H1 (cell line): ENCODE measurements at regions of chr10 and their contacts with region 1.

Region 1: GRCh38 chr10:21078410-21079329 is 181.6 kb upstream of the NEBL start:
- DNase-seq: peak; percentile 44 to 74
- H3K4me3 ChIP-seq: no peak overlapping the region
- H3K27ac ChIP-seq: no peak overlapping the region
- H3K4me1 ChIP-seq: peaks cover 0 to 3% (median 1%) of the 10 kb centered on the region in 4 experiments; a peak in 3 of 7 replicates
- H3K27me3 ChIP-seq: no peaks in the 10 kb centered on the region
- CTCF ChIP-seq: peak; percentile 62 to 88 (median 77)
- EP300 ChIP-seq: no peak
- POLR2A ChIP-seq: no peak
- RAD21 ChIP-seq: peak; percentile 95 to 96

Region 2: DNA sequence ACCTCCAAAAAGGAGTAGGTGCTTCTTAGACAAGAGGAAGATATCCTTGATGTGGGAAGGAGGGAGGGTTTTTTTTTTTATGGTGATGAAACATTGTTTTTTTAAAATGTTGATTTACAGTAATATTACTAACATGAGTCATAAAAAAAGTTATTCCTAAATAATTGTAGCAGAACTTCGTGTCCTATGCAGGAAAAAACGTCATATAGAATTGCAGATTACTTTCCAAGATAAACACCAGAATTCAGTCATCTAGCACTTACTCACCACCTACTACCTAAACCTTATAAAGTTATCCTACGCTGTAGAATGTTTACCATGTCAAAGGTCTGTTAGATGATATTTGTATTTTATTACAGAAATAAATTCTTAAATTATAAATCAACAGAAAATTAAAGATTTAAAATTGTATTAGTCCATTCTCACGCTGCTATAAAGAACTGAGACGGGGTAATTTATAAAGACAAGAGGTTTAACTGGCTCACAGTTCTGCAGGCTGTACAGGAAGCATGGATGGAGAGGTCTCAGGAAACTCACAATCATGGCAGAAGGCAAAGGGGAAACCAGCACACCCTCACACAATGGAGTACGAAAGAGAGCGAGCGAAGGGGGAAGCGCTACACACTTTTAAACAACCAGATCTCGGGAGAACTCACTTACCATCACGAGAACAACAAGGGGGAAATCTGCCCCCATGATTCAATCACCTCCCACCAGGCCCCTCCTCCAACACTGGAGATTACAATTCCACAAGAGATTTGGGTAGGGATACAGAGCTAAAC is 76.4 kb before region 1 on chr10:
- CTCF ChIA-PET with region 1: no interaction called
- POLR2A ChIA-PET with region 1: no interaction called
- DNase-seq: no peak
- H3K4me3 ChIP-seq: no peak overlapping the region
- H3K27ac ChIP-seq: no peak overlapping the region
- H3K4me1 ChIP-seq: no peaks in the 10 kb centered on the region
- H3K27me3 ChIP-seq: no peaks in the 10 kb centered on the region
- CTCF ChIP-seq: no peak
- EP300 ChIP-seq: no peak
- POLR2A ChIP-seq: no peak
- RAD21 ChIP-seq: no peak

Region 3: GRCh38 chr10:21068025-21068656 is 10.5 kb before region 1 on chr10:
- CTCF ChIA-PET with region 1: interaction called, 16 read pairs
- POLR2A ChIA-PET with region 1: no interaction called
- DNase-seq: no peak
- H3K4me3 ChIP-seq: no peak overlapping the region
- H3K27ac ChIP-seq: no peak overlapping the region
- H3K4me1 ChIP-seq: peaks cover 0 to 3% (median 0%) of the 10 kb centered on the region in 4 experiments; a peak in 1 of 7 replicates
- H3K27me3 ChIP-seq: no peaks in the 10 kb centered on the region
- CTCF ChIP-seq: no peak
- EP300 ChIP-seq: no peak
- POLR2A ChIP-seq: no peak
- RAD21 ChIP-seq: no peak

Region 4: DNA sequence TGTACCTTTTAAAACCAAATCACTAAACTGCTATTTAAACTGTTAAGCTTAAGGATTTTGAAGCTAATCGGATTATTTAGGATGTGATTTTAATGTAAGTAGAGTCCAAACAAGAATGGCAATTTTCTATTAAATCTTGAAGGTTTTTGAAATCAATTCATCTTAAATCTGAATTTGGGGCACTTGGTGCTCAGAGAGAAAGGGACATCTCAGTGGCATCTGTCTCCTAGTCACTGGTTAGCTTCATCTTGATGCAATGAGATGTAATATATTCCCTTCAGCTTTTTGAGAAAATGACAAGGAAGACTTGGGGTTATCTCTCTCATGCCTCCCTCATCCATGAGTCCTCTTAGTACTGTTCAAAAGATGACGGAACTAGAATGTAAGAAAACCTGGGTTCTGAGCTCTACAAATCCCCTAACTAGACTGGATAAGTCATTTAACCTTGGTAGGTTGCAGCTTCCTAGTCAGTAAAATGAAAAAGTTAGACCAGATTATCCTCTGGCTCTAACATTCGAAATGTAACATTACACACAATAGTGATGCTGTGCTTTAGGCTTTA is 16.9 kb after region 1 on chr10:
- CTCF ChIA-PET with region 1: interaction called, 11 read pairs
- POLR2A ChIA-PET with region 1: no interaction called
- DNase-seq: no peak
- H3K4me3 ChIP-seq: no peak overlapping the region
- H3K27ac ChIP-seq: no peak overlapping the region
- H3K4me1 ChIP-seq: no peaks in the 10 kb centered on the region
- H3K27me3 ChIP-seq: no peaks in the 10 kb centered on the region
- CTCF ChIP-seq: no peak
- EP300 ChIP-seq: no peak
- POLR2A ChIP-seq: no peak
- RAD21 ChIP-seq: no peak

Region 5: DNA sequence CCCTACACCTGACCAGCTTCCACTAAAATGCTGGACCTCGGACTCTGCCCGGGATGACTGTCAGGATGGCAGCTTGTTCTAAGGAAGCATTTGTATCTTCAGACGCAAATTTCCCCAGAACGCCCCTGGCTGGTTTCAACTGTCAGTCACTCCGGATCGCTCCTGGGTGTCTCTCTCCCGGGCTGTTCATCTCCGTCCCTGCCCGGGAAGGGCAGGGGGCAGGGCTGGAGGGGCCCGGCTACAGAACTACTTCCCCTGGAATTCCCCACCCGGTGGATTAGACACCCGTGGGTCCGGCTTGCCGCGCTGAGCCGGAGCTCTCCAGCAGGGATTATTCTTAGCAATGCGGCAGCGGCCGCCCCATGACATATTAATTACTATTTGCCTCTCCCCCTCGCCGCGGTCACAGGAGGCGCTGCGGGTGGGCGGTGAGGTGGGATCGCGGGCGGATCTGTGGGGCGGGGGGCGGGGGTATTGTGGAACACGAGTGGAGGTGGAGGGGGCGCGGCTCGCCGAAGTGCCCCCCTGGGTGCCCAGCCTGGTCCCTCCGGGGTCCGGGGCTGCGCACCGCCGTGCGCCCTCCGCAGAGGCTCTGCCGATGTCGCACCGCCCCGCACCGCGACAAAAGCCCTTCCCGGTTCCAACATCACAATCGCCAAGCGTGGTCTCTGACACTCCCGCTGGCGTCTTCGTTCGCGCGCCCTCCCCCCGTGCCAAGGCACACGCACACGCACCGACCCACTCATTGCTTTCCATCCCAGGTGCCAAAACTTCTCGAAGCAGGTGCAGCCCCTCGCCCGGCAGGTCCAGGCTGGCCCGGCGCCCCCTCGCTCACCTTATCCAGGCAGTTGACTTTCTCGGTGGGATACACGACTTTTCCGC is 94.5 kb after region 1 on chr10:
- CTCF ChIA-PET with region 1: interaction called, 11 read pairs
- POLR2A ChIA-PET with region 1: no interaction called
- DNase-seq: peak in 1 of 2 experiments; percentile 51
- H3K4me3 ChIP-seq: peak overlapping the region; percentile 59 to 82 (median 66)
- H3K27ac ChIP-seq: no peak overlapping the region
- H3K4me1 ChIP-seq: peaks cover 0 to 6% (median 3%) of the 10 kb centered on the region in 4 experiments; a peak in 4 of 7 replicates
- H3K27me3 ChIP-seq: peaks cover 0 to 18% (median 11%) of the 10 kb centered on the region in 4 experiments; a peak in 6 of 7 replicates
- CTCF ChIP-seq: no peak
- EP300 ChIP-seq: no peak
- POLR2A ChIP-seq: no peak
- RAD21 ChIP-seq: no peak

Region 6: DNA sequence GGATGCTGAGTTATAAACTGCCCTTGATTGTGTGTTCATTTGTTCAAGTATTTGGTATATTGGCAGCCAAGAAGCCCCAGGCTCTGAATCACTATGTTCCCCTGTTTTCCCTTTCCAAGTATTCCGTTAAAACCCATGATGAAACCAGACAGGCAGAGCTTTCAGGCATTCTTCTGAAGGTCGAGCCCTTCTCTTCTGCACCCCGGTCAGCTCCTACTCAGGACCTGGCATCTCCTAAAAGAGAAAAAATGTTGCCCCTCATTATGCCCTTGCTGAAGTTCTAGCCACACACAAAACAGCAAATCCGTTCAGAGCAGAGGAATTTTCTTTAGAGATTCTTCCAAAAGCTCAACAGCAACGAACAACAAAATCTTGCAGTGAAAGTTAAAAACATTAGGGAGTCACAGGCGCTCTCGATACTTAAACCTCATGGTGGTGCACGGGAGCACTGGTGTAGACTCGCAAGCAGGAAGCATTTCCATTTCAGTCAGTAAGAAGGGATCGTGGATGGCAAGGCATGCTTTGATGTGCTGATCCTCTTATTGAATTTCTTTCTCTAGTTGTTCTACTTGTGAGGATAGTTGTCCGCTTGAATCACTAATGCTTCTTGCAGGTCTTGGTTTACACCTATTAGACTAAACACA is 182.0 kb after region 1 on chr10:
- CTCF ChIA-PET with region 1: interaction called, 12 read pairs
- POLR2A ChIA-PET with region 1: no interaction called
- DNase-seq: no peak
- H3K4me3 ChIP-seq: no peak overlapping the region
- H3K27ac ChIP-seq: no peak overlapping the region
- H3K4me1 ChIP-seq: peaks cover 0 to 4% (median 1%) of the 10 kb centered on the region in 4 experiments; a peak in 3 of 7 replicates
- H3K27me3 ChIP-seq: no peaks in the 10 kb centered on the region
- CTCF ChIP-seq: no peak
- EP300 ChIP-seq: no peak
- POLR2A ChIP-seq: no peak
- RAD21 ChIP-seq: peak in 1 of 2 experiments; percentile 25; a peak in 2 of 4 replicates

Region 7: DNA sequence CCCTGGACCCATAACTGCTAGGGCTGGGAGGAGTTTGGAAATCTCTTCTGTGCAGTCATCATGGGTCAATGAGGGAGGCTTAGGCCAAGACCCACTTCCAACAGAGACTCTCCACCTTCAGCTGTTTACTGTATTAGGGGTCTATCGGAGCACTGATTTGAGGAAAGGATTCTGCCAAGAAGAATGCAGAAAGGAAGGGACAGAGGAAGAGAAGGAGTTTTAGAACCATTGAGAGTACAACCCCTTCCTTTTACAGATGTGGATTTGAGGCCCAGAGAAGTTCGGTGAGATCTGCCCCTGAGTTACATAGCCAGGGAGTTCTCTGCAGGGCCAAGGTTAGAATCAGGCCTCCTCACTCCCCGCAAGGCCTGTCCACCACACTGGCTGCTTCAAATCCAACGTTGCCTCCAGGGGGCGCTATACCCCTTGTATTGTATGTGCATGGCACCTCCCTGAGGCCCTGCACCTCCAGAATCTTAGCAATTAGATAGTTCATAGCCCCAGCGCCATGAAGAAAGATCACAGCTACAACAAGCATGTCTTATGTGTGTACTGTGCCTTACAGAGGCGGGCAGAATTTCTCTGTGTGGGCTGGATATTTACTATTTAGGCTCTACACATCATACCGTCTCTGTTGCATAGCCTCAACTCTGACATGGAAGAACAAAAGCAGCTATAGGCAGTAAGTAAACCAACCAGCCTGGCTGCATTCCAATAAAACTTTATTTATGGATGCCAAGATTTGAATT is 200.0 kb after region 1 on chr10:
- CTCF ChIA-PET with region 1: interaction called, 17 read pairs
- POLR2A ChIA-PET with region 1: no interaction called
- DNase-seq: peak; percentile 94 to 100
- H3K4me3 ChIP-seq: no peak overlapping the region
- H3K27ac ChIP-seq: no peak overlapping the region
- H3K4me1 ChIP-seq: peaks cover 6 to 20% (median 17%) of the 10 kb centered on the region in 4 experiments; a peak in 6 of 7 replicates
- H3K27me3 ChIP-seq: no peaks in the 10 kb centered on the region
- CTCF ChIP-seq: peak; percentile 84 to 95 (median 90)
- EP300 ChIP-seq: no peak
- POLR2A ChIP-seq: no peak
- RAD21 ChIP-seq: peak; percentile 97 to 98